BJ (cell line): ENCODE measurements at regions of chr7 and their contacts with region 1.

Region 1: GRCh38 chr7:33904681-33905388 is 504 bp upstream of the BMPER start:
- DNase-seq: no peak
- H3K4me3 ChIP-seq: peak overlapping the region; percentile 57
- H3K27me3 ChIP-seq: no peaks in the 10 kb centered on the region
- CTCF ChIP-seq: no peak; the same call in none of the 2 replicates

Region 2: DNA sequence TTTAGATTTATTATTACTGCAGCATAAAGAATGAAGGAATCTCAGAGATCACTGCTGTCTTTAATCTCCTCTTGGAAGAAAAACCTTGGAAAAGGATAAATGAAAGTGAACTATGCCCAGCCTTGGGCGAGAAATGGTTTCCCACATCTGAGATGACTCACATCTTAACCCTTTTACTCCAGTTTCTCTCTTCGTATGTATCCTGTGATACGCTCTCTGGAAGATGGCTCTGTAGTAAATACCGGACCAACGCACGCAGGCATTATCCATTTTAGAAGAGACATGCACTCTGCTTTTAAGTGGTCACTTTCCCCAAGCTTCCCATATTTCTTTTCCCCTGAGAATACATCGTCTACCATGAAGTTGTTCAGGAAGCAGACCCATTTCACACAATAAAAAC is 206.8 kb before region 1 on chr7:
- CTCF ChIA-PET with region 1: no interaction called
- POLR2A ChIA-PET with region 1: no interaction called
- DNase-seq: no peak
- H3K4me3 ChIP-seq: no peak overlapping the region
- H3K27me3 ChIP-seq: no peaks in the 10 kb centered on the region
- CTCF ChIP-seq: no peak

Region 3: GRCh38 chr7:34165929-34166550 is 261.2 kb after region 1 on chr7:
- CTCF ChIA-PET with region 1: no interaction called
- POLR2A ChIA-PET with region 1: interaction called, 20 read pairs
- DNase-seq: no peak
- H3K4me3 ChIP-seq: no peak overlapping the region
- H3K27me3 ChIP-seq: no peaks in the 10 kb centered on the region
- CTCF ChIP-seq: peak; percentile 72

Region 4: DNA sequence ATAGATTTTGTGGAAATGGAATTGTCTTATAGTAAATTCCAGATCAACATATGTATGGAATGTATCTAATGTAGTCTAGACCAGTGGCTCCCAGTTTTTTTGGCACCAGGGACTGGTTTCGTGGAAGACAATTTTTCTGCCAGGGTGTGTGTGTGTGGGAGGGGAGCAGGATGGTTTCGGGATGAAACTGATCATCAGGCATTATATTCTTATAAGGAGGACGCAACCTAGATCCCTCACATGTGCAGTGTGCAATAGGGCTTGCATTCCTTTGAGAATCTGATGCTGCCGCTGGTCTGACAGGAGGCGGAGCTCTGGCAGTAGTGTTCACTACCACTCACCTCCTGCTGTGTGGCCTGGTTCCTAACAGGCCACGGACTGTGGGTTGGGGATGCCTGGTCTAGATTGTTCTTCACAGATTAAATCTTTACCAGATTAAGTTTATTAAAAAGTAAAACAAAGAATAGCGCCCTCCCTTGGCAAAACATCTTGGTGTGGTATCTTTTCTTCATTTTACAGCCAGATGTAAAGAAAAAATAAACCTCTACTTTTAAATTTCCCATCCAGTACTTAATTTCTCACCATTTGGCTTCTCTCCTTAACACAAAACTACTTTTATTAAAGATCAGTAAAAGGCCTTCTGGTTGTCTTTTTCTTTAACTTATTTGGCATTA is 1944.5 kb after region 1 on chr7:
- CTCF ChIA-PET with region 1: no interaction called
- POLR2A ChIA-PET with region 1: interaction called, 10 read pairs
- DNase-seq: no peak
- H3K4me3 ChIP-seq: no peak overlapping the region
- H3K27me3 ChIP-seq: no peaks in the 10 kb centered on the region
- CTCF ChIP-seq: no peak